PC-3 (cell line): ENCODE measurements at regions of chrX and their contacts with region 1.

Region 1: GRCh38 chrX:108020631-108021030 is 24.2 kb upstream of the VSIG1 start:
- DNase-seq: peak; percentile 54
- ATAC-seq: no peak
- H3K4me3 ChIP-seq: no peak overlapping the region
- H3K27ac ChIP-seq: peak overlapping the region; percentile 22; the same call in 1 of the 2 replicates
- H3K4me1 ChIP-seq: peaks cover 56% of the 10 kb centered on the region
- H3K27me3 ChIP-seq: no peaks in the 10 kb centered on the region
- CTCF ChIP-seq: peak; percentile 78

Region 2: GRCh38 chrX:107662145-107662544 is 358.5 kb before region 1 on chrX:
- CTCF ChIA-PET with region 1: no interaction called
- POLR2A ChIA-PET with region 1: no interaction called
- intact Hi-C with region 1: no loop called
- DNase-seq: no peak
- ATAC-seq: no peak
- H3K4me3 ChIP-seq: no peak overlapping the region
- H3K27ac ChIP-seq: no peak overlapping the region
- H3K4me1 ChIP-seq: no peaks in the 10 kb centered on the region
- H3K27me3 ChIP-seq: no peaks in the 10 kb centered on the region
- CTCF ChIP-seq: no peak

Region 3: DNA sequence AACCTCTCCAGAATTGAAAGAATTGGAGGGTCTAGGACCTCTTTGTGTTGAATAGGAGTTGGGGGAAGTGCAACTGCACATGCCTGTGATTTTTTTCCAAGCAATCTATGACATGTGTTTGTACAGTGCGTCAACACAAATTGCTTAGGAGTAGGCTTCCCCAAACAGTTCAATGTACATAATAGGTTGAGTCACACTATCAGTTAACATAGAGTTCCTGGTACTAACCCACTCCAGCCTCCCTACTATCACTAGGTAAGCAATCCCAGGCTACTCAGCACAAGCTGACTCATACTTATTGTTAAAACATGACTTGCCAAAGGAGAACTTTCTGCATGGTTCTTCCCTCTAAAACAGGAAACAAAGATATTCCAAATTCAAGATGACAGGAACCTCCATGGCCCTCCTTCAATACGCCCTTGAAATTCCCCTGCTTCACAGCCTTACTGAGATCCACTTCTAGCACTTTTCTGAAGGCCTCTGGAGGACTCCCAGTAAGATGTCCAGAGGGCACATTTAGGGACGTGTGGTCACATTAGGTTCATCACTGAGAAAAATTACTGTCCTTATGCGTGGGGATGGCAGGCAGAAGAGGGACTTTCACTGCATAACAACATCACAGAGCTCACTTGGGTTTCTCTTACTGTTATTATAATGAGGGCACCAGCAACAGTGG is 15.8 kb after region 1 on chrX:
- CTCF ChIA-PET with region 1: interaction called, 3 read pairs
- POLR2A ChIA-PET with region 1: interaction called, 3 read pairs
- intact Hi-C with region 1: loop called (anchors 2 kb)
- DNase-seq: peak; percentile 95
- ATAC-seq: peak; percentile 92
- H3K4me3 ChIP-seq: no peak overlapping the region
- H3K27ac ChIP-seq: peak overlapping the region; percentile 98
- H3K4me1 ChIP-seq: peaks cover 53% of the 10 kb centered on the region
- H3K27me3 ChIP-seq: no peaks in the 10 kb centered on the region
- CTCF ChIP-seq: no peak

Region 4: DNA sequence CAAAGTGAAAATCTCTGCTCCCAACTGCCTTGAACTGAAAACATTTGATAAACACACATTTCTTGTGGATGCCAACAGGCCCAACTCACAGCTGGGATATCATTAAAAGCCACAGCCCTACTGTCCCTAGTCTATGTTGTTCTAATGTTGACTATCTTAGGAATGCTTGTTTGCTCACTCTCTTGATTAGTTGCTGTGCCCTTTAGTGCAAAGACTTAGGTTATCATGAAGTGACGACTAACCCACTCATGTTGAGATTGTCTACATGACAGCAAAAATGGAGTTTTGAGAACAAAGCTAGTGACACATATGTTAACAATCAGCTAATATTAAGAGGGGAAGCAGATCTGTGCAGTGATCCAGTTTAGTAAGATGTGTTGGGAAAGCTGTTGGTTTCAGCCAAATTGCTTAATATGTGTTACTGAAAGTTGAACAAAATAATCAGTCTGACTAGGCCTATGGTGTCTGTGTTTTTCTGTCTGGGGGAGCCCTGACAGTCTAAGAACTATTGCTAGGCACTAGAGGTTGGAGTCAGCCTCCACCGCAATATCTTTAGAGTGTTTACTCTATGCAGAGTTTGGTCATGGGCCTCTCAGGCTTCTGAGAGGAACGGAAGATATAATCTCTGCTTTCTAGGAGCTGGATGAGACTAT is 196.4 kb after region 1 on chrX:
- CTCF ChIA-PET with region 1: no interaction called
- POLR2A ChIA-PET with region 1: no interaction called
- intact Hi-C with region 1: no loop called
- DNase-seq: no peak
- ATAC-seq: no peak
- H3K4me3 ChIP-seq: no peak overlapping the region
- H3K27ac ChIP-seq: no peak overlapping the region
- H3K4me1 ChIP-seq: no peaks in the 10 kb centered on the region
- H3K27me3 ChIP-seq: no peaks in the 10 kb centered on the region
- CTCF ChIP-seq: no peak